AG04450 (cell line): ENCODE measurements at regions of chr5 and their contacts with region 1.

Region 1: DNA sequence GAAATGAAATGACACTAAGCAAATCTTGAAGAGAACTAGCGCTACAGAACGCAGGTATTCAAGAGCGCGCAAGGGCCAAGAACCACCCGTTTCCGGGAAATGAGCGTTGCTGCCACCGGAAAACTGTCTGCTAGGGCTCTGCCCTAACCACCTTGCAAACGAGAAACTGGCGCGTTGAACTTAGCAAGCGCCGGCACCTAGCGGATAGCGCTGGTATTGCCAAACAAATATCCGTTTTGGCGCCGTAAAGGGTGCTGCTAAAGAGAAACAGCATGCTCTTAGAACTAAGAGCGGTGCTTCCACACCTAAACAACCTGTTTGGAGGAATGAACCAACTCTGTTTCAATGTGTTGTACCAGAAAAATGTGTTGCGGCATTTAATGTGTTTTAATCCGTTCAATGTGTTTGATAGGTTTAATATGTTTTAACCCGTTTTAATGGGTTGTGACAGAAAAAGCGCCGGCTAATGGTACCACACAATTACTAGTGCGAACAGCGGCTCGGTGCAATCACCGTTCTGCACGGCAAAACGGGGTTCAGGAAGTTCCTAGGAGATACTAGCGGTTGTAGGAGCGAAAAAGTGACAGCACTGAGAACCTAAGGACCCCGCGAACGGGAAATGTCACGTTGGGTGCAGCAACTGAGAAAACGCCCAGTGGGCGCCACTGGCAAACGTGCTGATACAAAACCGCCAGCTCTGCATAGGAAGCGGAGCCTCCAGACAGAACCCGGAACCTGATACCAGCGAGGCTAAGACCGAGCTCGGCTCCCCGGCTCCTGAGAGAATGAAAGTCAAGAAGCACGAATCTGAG is at the start of gene ANXA2R:
- DNase-seq: peak; percentile 91
- H3K4me3 ChIP-seq: peak within 1 kb of the TSS; percentile 83
- H3K27ac ChIP-seq: peak within 1 kb of the TSS; percentile 98
- H3K27me3 ChIP-seq: no peaks in the 10 kb centered on the region
- CTCF ChIP-seq: peak; percentile 90
- polyA plus RNA-seq, gene ANXA2R: 3.7 and 4.9 TPM in 2 replicates

Region 2: DNA sequence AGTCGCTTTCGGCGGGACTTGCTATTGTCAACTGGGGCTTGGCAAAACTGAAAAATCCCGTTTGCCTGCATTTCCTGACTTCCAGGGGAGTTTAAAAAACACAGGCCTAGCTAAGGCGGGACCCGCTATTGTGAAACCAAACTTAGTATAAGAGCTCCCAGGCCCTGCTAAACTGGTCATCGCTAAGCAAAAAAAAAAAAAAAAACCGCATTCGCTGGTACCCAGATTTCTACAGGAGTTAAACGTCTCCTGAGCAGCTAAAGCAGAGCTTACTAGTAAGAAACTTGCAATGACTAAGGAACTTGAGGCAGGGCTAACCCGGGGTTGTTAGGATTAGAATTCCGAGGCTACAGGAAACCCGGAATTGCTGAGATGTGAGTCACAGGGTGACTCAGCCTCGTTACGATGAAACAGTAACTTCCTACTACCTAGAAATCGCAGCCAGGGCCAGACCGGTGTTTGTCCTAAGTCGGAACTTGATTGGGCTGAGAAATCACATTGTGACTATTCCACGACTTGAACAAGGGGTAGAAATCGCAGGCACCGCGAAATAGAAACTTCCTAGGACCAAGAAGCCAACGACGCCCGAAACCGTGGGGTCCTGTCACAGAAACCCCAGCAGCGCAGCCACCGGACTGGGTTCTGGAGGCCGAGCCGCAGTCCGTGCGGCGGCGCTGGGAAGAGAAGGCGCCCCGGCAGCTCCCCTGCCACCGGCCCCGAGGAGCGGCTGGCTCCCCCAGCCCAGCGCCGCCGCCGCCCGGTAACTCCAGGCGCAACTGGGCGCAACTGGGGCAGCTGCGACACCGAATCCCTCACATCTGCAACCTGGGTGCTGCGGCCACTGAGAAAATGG is 89.8 kb before region 1 on chr5:
- CTCF ChIA-PET with region 1: interaction called, 4 read pairs
- POLR2A ChIA-PET with region 1: interaction called, 10 read pairs
- DNase-seq: peak; percentile 99
- H3K4me3 ChIP-seq: peak overlapping the region; percentile 64
- H3K27ac ChIP-seq: peak overlapping the region; percentile 99
- H3K27me3 ChIP-seq: no peaks in the 10 kb centered on the region
- CTCF ChIP-seq: no peak

Region 3: GRCh38 chr5:42982107-42982622 is 58.3 kb before region 1 on chr5:
- CTCF ChIA-PET with region 1: no interaction called
- POLR2A ChIA-PET with region 1: no interaction called
- DNase-seq: no peak
- H3K4me3 ChIP-seq: no peak overlapping the region
- H3K27ac ChIP-seq: no peak overlapping the region
- H3K27me3 ChIP-seq: no peaks in the 10 kb centered on the region
- CTCF ChIP-seq: no peak

Region 4: DNA sequence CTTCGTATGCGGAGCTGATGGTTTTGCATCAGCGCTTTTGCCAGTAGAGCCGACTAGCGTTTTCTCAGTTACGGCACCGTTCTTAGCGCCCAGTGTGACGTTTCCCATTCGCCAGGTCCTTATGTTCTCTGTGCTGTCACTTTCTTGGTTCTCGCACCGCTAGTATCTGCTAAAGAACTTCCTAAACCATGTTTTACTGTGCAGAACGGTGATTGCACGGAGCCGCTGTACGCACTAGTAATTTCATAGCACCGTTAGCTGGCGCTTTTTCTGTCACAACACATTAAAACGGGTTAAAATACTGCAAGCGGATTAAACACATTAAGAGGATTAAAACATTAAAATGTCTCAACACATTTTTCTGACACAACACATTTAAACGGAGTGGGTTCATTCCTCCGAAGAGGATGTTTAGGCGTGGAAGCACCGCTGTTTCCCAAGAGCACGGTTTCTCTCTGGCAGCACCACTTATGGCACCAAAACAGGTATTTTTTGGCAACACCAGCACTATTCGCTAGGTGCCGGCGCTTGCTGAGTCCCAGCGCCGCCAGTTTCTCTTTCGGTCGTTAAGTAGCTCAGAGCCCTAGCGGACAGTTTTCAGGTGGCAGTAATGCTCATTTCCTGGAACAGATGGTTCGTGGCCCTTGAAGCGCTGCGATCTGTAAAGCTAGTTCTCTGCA is 20.7 kb before region 1 on chr5:
- CTCF ChIA-PET with region 1: interaction called, 38 read pairs
- POLR2A ChIA-PET with region 1: interaction called, 24 read pairs
- DNase-seq: no peak
- H3K4me3 ChIP-seq: peak overlapping the region; percentile 68
- H3K27ac ChIP-seq: peak overlapping the region; percentile 90
- H3K27me3 ChIP-seq: no peaks in the 10 kb centered on the region
- CTCF ChIP-seq: peak; percentile 61

Region 5: DNA sequence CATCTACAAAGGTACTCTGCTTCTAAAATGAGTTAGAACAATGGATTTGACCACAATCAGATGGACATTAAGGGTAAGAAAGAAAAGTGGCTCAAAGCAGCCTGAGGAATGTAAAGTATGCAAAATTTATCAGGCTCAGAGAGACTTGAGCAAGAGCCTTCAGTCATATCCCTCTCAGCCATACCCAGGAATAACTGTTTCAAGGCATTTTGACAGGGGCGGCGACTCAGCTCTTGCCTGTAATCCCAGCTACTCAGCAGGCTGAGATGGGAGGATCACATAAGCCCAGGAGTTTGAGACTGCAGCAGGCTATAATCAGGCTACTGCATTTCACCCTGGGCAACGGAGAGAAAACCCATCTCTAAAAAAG is 38.5 kb after region 1 on chr5:
- CTCF ChIA-PET with region 1: no interaction called
- POLR2A ChIA-PET with region 1: no interaction called
- DNase-seq: no peak
- H3K4me3 ChIP-seq: no peak overlapping the region
- H3K27ac ChIP-seq: no peak overlapping the region
- H3K27me3 ChIP-seq: no peaks in the 10 kb centered on the region
- CTCF ChIP-seq: no peak

Region 6: GRCh38 chr5:43367909-43368648 is 327.6 kb after region 1 on chr5:
- CTCF ChIA-PET with region 1: no interaction called
- POLR2A ChIA-PET with region 1: no interaction called
- DNase-seq: no peak
- H3K4me3 ChIP-seq: no peak overlapping the region
- H3K27ac ChIP-seq: no peak overlapping the region
- H3K27me3 ChIP-seq: no peaks in the 10 kb centered on the region
- CTCF ChIP-seq: no peak